A673 (cell line): ENCODE measurements at regions of chr18 and their contacts with region 1.

Region 1: GRCh38 chr18:57959278-57959677 is 84.7 kb upstream of the NEDD4L start:
- DNase-seq: peak; percentile 62
- H3K4me3 ChIP-seq: no peak overlapping the region
- H3K27ac ChIP-seq: no peak overlapping the region
- H3K4me1 ChIP-seq: no peaks in the 10 kb centered on the region
- H3K27me3 ChIP-seq: no peaks in the 10 kb centered on the region
- CTCF ChIP-seq: peak; percentile 60

Region 2: DNA sequence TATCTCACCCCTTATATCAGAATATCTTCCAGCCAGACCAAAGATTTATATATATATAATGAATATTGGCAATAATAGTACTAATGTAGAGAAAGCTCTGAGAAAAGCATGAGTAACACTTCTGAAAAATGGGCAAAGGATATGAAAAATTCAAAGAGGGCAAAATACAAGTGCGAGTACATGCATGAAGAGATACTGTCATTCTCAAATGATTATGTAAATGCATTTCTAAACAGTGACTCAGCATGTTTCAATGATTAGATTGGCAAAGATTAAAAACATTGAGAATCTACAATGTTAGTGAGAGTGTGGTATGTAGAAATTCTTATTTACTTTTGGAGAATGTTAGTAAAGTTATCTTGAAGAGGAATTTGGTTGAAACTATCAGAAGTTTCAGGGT is 33.6 kb before region 1 on chr18:
- CTCF ChIA-PET with region 1: no interaction called
- POLR2A ChIA-PET with region 1: no interaction called
- intact Hi-C with region 1: loop called (anchors 1 kb)
- DNase-seq: peak; percentile 47
- H3K4me3 ChIP-seq: no peak overlapping the region
- H3K27ac ChIP-seq: no peak overlapping the region
- H3K4me1 ChIP-seq: peaks cover 1% of the 10 kb centered on the region
- H3K27me3 ChIP-seq: no peaks in the 10 kb centered on the region
- CTCF ChIP-seq: no peak

Region 3: GRCh38 chr18:58117786-58118403 is 158.6 kb after region 1 on chr18:
- CTCF ChIA-PET with region 1: interaction called, 18 read pairs
- POLR2A ChIA-PET with region 1: no interaction called
- intact Hi-C with region 1: loop called (anchors 10 kb)
- DNase-seq: no peak
- H3K4me3 ChIP-seq: no peak overlapping the region
- H3K27ac ChIP-seq: no peak overlapping the region
- H3K4me1 ChIP-seq: no peaks in the 10 kb centered on the region
- H3K27me3 ChIP-seq: no peaks in the 10 kb centered on the region
- CTCF ChIP-seq: no peak

Region 4: DNA sequence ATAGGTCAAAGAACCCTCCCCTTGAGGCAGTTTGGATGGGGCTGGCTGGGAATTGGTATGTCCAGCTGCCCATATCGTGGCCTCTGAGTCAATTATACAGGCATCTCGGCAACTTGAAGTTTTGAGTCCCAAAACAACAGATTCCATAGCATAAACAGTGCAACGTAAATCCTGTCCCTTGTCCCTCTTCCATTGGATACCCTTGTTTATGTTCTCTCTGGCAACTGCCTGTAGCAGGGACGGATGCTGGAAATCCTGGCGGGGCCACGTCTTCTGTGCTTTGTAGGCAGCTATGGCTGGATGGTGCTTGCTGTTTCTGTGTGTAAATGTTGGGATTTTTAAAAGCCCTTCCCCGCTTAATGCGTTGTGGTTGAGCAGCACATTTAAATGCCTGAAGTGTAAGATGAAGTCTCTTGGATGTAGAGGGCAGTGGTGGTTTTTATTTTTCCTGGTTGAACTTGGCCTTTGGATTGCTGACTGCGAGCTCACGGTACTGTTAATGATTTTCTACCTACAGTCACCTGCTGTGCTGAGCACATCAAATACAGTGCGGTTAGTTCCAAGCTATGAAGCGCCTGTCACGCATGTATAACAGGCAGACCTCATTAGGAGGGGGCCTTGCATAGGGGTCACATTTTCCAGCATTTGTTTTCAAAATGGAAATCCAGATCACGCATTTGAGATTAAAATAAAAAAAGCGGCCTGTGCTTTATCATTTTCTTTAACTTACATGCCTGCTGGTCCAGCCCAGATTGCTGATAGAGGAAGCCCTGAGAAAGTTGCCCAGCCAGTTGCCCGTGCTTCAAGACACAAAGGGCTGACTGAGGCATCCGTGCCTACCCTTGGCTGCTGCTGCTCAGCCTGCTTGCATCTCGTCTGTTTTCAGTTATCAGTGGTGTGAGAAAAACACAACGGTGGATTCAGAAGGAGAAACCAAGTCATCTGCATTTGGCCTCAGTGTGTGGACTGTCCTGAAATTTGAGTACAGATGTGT is 169.4 kb after region 1 on chr18:
- CTCF ChIA-PET with region 1: no interaction called
- POLR2A ChIA-PET with region 1: no interaction called
- intact Hi-C with region 1: loop called (anchors 10 kb)
- DNase-seq: no peak
- H3K4me3 ChIP-seq: no peak overlapping the region
- H3K27ac ChIP-seq: no peak overlapping the region
- H3K4me1 ChIP-seq: no peaks in the 10 kb centered on the region
- H3K27me3 ChIP-seq: peaks cover 25% of the 10 kb centered on the region
- CTCF ChIP-seq: no peak